ENCODE measurements at regions of chr20 and their contacts with region 1.

Region 1: DNA sequence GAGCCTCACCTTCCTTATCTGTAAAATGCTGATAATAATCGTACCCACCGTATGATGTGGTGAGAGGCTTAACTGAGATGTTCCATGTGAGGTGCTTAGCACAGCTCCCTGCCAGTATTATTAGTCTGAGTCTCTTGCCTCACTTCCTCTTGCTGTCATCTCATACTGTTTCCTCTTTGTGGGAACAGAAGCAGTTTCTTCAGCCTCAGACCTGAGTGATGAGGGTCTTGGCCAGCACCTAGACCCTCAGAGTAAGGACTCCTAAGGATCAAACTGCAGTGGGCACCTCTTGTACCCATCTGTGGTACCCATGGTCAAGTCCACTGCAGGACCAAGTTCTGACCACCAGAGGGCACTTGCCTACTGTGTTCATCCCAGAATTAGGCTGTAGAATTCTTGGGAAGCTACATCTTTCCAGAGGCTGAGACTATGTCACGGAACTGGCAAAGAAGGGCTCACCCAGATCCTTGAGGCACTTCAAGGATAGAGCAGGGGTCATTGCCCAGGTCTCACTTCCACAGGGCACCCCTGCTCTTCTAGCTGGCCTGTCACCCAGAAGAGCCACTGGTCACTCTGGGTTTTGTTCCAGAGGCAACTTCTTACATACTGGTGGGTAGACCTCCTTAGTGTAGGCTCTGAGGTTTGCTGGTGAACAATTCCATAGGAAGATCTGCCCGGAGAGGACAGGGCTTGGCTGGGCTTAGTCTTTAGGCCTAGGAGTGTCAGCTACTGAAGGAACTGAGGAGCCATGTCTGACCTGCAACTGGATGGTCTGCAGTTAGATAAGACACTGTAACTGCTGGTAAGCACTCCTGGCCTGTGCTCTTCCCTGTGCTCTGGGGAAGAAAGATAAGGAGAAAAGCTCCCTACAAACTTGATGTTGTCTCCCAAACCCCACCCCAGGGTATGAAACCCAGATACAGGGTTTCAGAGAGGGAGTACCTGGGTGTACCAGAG is 20.6 kb upstream of the SGK2 start:
- DNase-seq: peak; percentile 8 to 50 (median 41)
- H3K4me3 ChIP-seq: no peak overlapping the region
- H3K4me3 Mint-ChIP-seq: no peak overlapping the region
- H3K27ac ChIP-seq: no peak overlapping the region
- H3K27ac Mint-ChIP-seq: peak overlapping the region in 3 of 7 donors; percentile 21 to 56 (median 54)
- H3K4me1 ChIP-seq: peaks cover 10% of the 10 kb centered on the region in 2 donors
- H3K4me1 Mint-ChIP-seq: peaks cover 14% of the 10 kb centered on the region
- H3K27me3 ChIP-seq: no peaks in the 10 kb centered on the region
- H3K27me3 Mint-ChIP-seq: no peaks in the 10 kb centered on the region
- CTCF ChIP-seq: peak; percentile 94

Region 2: DNA sequence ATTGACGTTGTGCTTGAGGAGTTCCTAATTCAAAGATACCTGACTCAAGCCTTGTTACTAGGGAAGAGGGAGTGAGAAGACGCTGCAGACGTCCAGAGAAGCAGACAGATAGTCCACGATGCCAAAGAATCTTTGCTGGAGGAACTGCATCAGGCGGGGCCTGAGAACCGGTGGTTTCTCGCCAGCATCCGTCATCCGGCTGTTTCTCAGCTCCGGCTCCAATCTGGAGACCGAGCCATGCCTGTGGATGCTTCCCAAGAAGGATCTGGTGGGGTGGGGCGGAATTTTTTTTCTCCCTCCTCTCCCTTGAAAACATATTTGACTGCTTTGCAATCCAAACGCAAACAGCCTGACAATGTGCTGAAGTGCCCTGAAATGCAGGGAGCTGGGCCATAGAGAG is 206.3 kb before region 1 on chr20:
- intact Hi-C with region 1: no loop called
- DNase-seq: no peak
- H3K4me3 ChIP-seq: no peak overlapping the region
- H3K4me3 Mint-ChIP-seq: no peak overlapping the region
- H3K27ac ChIP-seq: no peak overlapping the region
- H3K27ac Mint-ChIP-seq: no peak overlapping the region
- H3K4me1 ChIP-seq: no peaks in the 10 kb centered on the region
- H3K4me1 Mint-ChIP-seq: no peaks in the 10 kb centered on the region
- H3K27me3 ChIP-seq: no peaks in the 10 kb centered on the region
- H3K27me3 Mint-ChIP-seq: peaks cover 0 to 4% (median 1%) of the 10 kb centered on the region in 3 donors
- CTCF ChIP-seq: no peak

Region 3: DNA sequence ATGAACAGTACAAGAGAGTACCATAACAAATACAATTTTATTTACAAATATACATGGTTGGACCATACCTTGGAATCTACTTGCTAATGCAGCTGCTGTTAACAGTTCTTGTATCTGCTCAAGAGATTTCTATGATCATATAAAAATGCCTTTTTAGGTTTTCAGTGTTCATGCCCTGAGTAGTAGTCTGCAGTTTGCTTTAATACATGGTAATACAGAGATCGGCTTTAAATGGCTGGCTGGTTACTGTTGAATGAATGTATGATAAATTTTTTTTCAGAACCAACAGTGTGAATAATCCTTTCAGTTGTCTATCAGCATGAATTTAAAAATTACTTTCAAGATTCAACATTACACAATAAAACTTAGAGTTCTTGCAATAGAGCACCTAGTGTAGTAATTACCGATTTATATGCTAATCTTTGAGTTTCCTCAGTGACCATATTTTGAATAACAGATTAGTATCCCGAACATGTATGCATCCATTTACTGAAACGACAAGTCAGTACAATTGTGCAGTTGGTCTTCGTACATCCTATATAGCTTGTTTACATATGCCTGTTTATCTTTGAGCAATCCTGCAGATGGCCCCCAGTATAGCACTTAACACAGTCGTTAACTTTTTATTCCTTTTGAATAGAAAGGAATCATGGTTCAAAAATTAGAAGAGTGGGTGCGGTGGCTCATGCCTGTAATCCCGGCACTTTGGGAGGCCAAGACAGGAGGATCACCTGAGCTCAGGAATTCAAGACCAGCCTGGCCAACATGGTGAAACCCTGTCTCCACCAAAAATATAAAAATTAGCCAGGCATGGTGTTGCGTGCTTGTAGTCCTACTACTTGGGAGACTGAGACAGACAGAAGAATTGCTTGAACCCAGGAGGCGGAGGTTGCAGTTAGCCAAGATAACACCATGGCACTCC is 74.1 kb before region 1 on chr20:
- intact Hi-C with region 1: no loop called
- DNase-seq: no peak
- H3K4me3 ChIP-seq: no peak overlapping the region
- H3K4me3 Mint-ChIP-seq: no peak overlapping the region
- H3K27ac ChIP-seq: no peak overlapping the region
- H3K27ac Mint-ChIP-seq: peak overlapping the region in 1 of 7 donors; percentile 1
- H3K4me1 ChIP-seq: peaks cover 2 to 6% of the 10 kb centered on the region in 2 donors
- H3K4me1 Mint-ChIP-seq: peaks cover 11% of the 10 kb centered on the region
- H3K27me3 ChIP-seq: no peaks in the 10 kb centered on the region
- H3K27me3 Mint-ChIP-seq: peaks cover 0 to 3% (median under 1%) of the 10 kb centered on the region in 3 donors
- CTCF ChIP-seq: no peak

Region 4: GRCh38 chr20:43691928-43692524 is 153.8 kb after region 1 on chr20:
- intact Hi-C with region 1: loop called (anchors 10 kb)
- DNase-seq: peak; percentile 12 to 31 (median 25)
- H3K4me3 ChIP-seq: no peak overlapping the region
- H3K4me3 Mint-ChIP-seq: no peak overlapping the region
- H3K27ac ChIP-seq: no peak overlapping the region
- H3K27ac Mint-ChIP-seq: no peak overlapping the region
- H3K4me1 ChIP-seq: no peaks in the 10 kb centered on the region
- H3K4me1 Mint-ChIP-seq: no peaks in the 10 kb centered on the region
- H3K27me3 ChIP-seq: no peaks in the 10 kb centered on the region
- H3K27me3 Mint-ChIP-seq: no peaks in the 10 kb centered on the region
- CTCF ChIP-seq: peak; percentile 58

Measured in CD14-positive monocyte (primary cell).